ENCODE measurements at regions of chr7 and their contacts with region 1.

Region 1: GRCh38 chr7:17339139-17339538 is 40.7 kb downstream of the AHR start:
- DNase-seq: no peak
- H3K4me3 ChIP-seq: no peak overlapping the region
- H3K27ac ChIP-seq: no peak overlapping the region
- H3K4me1 ChIP-seq: no peaks in the 10 kb centered on the region
- H3K27me3 ChIP-seq: no peaks in the 10 kb centered on the region
- CTCF ChIP-seq: no peak

Region 2: GRCh38 chr7:16695621-16696237 is 643.4 kb before region 1 on chr7:
- CTCF ChIA-PET with region 1: no interaction called
- POLR2A ChIA-PET with region 1: no interaction called
- intact Hi-C with region 1: loop called (anchors 10 kb)
- DNase-seq: peak; percentile 37 to 63
- H3K4me3 ChIP-seq: no peak overlapping the region
- H3K27ac ChIP-seq: no peak overlapping the region
- H3K4me1 ChIP-seq: no peaks in the 10 kb centered on the region
- H3K27me3 ChIP-seq: no peaks in the 10 kb centered on the region
- CTCF ChIP-seq: peak; percentile 89